Prostate gland (tissue), 2 donors: ENCODE measurements at regions of chr10 and their contacts with region 1.

Region 1: DNA sequence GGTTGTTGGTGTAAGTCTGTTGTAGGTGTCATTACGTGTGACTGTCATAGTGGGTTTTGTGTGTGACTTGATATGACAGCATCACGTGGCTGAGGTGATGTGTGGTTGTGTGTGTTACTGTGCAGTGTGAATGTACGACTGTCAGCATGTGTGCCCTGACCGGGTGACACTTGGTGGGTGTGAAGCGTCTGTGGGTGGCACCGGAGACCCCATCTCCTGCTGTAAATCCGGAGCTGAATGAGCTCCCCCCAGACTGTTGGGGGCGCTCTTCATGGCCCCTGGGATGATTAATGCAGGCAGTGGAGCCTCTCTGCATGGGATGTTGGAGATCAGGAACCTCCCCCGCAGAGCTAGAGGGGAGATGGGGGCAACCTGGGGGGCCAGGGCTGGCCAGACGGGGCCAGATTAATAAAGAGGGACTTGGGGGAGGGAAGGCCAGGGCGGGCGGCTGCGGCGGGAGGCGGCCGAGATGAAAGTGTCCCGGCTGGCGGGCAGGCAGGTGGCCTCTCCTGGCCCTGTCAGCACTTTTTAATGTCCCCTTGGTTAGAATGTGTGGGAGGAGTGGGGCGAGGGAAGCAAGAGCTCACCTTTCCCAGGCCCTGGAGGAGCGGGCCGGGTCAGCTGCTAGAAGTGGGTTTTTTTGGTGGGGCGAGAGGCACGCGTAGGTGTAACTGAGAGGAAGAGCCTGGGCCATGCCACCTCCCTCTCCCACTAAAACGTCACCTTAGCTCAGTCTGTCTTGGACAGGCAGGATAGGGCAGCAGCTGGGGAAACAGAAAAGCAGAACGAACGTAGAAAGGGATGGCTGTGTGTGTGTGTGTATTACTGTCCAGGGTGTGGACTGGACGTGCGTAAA is 34.1 kb downstream of the HIF1AN start:
- DNase-seq: no peak
- H3K4me3 ChIP-seq: no peak overlapping the region
- H3K27ac ChIP-seq: no peak overlapping the region
- H3K4me1 ChIP-seq: no peaks in the 10 kb centered on the region
- H3K27me3 ChIP-seq: no peaks in the 10 kb centered on the region
- CTCF ChIP-seq: no peak
- POLR2A ChIP-seq: no peak

Region 2: DNA sequence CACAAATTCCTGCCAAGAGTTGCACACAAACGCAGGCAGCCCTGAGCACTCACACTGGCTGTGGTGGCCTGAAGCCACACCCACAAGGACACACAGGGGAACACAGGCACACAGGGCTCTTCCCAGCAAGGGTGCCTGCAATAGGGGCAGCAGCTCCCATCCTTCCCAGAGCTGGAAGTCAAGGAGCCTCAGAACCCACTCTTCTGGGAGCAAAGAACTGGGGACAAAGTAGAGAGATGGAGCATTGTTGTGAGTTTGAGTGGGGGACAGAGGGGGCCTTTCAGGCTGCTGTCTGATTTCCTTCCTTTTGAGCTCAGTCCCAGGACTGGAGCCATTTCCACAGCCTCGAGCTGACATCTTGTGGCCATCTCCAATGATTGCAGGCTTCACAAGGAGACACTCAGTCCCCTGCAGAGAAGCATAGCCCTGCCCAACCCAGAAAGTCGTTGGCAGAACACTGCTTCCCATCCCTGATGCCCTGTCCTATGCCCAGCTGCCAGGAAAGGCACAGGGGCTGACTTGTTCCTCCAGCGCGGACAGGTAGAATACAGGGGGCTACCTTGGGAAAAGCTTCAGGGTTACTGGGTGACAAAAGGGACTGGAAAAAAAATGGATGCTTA is 308.6 kb after region 1 on chr10:
- intact Hi-C with region 1: loop called (anchors 5 kb)
- DNase-seq: peak; percentile 44
- H3K4me3 ChIP-seq: no peak overlapping the region
- H3K27ac ChIP-seq: no peak overlapping the region
- H3K4me1 ChIP-seq: no peaks in the 10 kb centered on the region
- H3K27me3 ChIP-seq: peaks cover 1% of the 10 kb centered on the region
- CTCF ChIP-seq: peak in 3 of 4 experiments; percentile 53 to 73 (median 71)
- POLR2A ChIP-seq: no peak